Ovary (tissue), 10 donors: ENCODE measurements at regions of chr19 and their contacts with region 1.

Region 1: DNA sequence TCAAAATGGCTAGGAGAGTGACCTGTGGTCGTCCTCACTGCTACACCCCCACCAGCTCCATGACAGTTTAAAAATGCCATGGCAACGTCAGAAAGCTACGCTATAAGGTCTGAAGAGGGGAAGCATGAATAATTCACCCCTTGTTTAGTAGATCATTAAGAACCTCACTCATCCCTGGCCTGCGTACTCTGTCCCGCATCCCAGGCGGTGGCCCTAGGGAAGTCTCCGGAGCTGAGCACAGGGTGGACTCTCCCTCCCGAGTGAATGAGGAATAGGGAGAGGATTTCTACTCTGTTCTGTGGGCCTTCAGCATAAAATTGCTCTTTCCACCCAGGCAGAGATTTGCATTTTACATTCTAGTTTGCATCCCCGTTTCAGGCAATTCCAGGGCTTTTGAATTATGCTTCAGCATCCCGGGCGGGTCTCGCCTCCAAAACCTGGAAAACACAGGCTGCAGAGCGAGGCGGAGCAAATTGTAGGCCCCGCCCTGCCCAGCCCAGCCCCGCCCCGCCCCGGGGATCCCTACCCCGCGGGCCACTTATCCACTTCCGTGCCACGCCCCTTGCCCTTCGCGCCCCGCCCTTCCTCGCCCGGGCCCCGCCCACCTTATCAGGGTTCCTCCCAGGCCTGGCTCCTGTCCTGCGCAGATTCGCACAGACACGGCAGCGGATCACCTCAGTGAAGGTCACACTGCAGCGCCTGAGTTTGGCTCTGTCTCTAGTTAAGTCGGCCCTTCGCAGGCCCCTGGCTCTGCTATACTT is 7.5 kb upstream of the ZNF525 start:
- DNase-seq: no peak
- H3K4me3 ChIP-seq: no peak overlapping the region
- H3K27ac ChIP-seq: no peak overlapping the region
- H3K4me1 ChIP-seq: no peaks in the 10 kb centered on the region
- H3K27me3 ChIP-seq: no peaks in the 10 kb centered on the region
- CTCF ChIP-seq: no peak
- EP300 ChIP-seq: no peak
- POLR2A ChIP-seq: no peak

Region 2: GRCh38 chr19:52366414-52366824 is 991.6 kb before region 1 on chr19:
- intact Hi-C with region 1: no loop called
- DNase-seq: no peak
- H3K4me3 ChIP-seq: no peak overlapping the region
- H3K27ac ChIP-seq: no peak overlapping the region
- H3K4me1 ChIP-seq: no peaks in the 10 kb centered on the region
- H3K27me3 ChIP-seq: no peaks in the 10 kb centered on the region
- CTCF ChIP-seq: no peak
- EP300 ChIP-seq: no peak
- POLR2A ChIP-seq: no peak

Region 3: DNA sequence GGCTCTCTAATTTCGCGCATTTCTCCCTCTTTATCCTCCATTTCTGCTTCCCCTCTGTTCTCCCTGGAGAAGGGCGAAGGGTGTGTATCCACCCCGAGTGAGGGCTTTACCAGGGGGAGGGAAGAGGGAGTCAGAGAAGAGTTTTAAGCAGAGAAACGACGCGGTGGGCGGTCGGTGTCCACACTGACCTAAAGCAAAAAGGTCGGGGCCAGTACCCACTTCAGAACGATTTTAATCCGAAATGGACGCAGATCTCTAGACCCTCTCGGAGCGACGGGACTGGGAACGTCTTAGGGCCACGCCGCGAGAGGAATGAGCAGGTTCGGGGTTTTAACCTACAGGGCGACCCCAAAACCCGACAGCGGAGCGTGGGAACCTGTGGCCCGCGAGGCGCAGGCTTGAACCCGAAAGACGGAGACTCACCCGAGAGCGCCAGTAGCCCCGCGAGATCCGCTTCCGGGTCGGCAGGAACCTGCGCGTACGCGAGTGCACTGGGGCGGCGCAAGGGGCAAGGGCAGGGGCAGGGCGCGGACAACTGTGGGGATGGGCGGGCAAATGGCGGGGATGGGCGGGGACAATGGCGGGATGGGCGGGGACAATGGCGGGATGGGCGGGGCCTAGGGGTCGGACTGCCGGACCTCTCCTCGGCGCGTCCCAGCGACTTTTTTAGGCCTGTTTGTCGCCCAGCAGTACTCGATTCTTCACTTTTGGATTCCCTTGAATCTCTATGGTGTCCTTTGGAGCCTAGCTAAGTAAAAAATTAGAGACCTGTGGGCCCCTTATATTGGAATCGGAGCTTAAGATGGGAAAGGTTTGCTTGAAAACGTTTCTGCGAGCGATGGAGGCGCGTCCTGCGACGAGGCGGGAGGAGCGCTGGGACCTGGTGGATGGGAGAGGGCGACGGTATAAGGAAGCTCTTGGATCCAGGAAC is 103.3 kb before region 1 on chr19 and contains the start of gene ZNF677:
- intact Hi-C with region 1: loop called in 1 of 4 experiments (anchors 5 kb)
- DNase-seq: peak; percentile 92 to 96 (median 94)
- H3K4me3 ChIP-seq: peak within 1 kb of the TSS; percentile 58
- H3K27ac ChIP-seq: peak within 1 kb of the TSS; percentile 16 to 78
- H3K4me1 ChIP-seq: peaks cover 3% of the 10 kb centered on the region
- H3K27me3 ChIP-seq: no peaks in the 10 kb centered on the region
- CTCF ChIP-seq: no peak
- EP300 ChIP-seq: no peak
- POLR2A ChIP-seq: peak; percentile 47
- total RNA-seq, gene ZNF677: 19.4 to 31.3 (median 28.8) TPM